Aorta (tissue), 5 donors: ENCODE measurements at regions of chr4 and their contacts with region 1.

Region 1: DNA sequence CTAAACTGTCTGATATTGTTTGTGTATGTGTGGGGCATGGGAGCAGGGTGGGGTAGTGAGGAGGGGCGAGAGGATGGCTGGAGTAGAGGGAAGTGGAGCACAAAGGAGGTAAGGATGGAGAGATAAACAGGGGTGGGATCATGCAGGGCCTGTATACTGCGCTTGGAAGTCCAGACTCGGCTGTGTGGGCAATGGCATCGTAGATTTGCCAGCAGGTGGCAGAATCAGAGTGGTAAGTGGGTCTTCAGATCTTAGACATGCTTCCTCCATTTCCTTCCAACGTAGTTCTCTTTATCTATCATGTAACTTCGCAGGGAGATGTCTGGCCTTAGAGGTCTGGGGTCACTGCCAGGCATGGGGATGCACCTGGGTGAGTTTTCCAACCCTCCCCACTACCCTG is 155.5 kb downstream of the PDGFRA start:
- DNase-seq: no peak
- ATAC-seq: peak; percentile 11
- H3K4me3 ChIP-seq: no peak overlapping the region
- H3K27ac ChIP-seq: no peak overlapping the region
- H3K4me1 ChIP-seq: no peaks in the 10 kb centered on the region
- H3K27me3 ChIP-seq: no peaks in the 10 kb centered on the region

Region 2: DNA sequence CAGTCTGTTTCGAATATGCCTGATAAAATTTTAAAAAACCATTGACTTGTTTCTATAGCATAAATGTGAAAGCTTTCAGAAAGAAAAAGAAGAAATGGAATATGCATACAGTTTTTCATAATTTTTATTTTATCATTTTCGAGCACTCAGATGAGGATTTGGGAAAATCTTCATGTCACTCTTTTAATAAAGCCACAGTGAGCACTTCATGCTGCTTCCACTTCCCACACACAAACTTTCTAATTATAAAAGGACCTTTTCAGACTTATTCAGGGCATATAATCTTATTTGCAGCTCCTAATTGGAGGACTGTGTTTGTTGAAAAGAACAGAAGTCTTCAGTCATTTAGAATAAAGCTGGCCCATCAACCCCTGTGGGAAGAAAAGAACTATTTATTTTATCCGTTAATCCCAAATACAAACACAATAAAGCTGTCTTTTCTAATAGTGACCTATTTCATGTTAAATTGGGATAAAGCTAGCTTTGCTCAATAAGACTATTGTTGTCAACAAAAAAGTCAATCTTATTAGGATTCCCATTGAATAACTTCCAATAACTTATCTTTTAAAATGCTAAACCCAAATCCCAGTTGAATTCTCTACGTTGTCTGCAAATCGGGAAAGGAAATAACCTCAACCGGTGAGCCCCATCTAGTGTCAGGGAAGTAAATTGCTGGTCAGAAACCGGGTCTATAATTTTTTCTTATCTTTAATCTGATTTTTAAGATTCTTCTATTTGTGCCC is 56.0 kb after region 1 on chr4:
- intact Hi-C with region 1: loop called in 1 of 2 experiments (anchors 5 kb)
- DNase-seq: no peak
- ATAC-seq: no peak
- H3K4me3 ChIP-seq: peak overlapping the region in 1 of 2 donors; percentile 26
- H3K27ac ChIP-seq: no peak overlapping the region
- H3K4me1 ChIP-seq: peaks cover 0 to 1% of the 10 kb centered on the region in 2 donors
- H3K27me3 ChIP-seq: no peaks in the 10 kb centered on the region